Activated naive CD4-positive, alpha-beta T cell treated with anti-CD3 and anti-CD28 coated beads for 36 hours (primary cell): ENCODE measurements at regions of chr6 and their contacts with region 1.

Region 1: DNA sequence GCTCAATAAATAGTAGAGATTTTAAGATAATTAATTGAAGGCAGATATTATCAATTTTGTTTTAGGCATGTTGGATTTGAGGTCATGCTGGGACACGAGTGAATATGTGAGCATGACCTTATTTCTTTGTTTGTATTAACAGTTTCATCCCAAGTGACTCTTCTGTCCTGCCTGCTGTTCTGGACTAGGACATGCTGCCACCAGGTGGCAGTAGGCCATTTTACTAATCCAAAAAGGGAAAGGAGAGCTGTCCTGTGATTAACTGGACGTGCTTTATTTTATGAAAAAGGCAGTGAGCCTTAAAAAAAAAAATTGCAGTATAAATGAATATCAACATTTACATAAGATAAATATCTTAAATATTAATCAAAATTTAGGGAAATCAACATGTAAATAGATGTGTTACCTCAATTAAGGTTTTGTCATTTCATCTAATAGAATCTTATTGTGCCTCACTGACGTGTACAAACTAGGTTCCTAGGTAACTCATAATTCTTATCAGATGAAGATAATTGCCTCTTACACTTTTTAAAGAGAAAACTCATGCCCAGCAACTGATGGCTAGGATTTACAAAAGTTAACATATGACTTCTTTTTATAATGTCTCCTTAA is 49.8 kb downstream of the FRK start:
- DNase-seq: peak; percentile 74
- H3K4me3 Mint-ChIP-seq: no peak overlapping the region
- H3K27ac Mint-ChIP-seq: peak overlapping the region; percentile 35
- H3K4me1 Mint-ChIP-seq: peaks cover 18% of the 10 kb centered on the region
- H3K27me3 Mint-ChIP-seq: peaks cover 16% of the 10 kb centered on the region

Region 2: GRCh38 chr6:116027801-116028200 is 16.9 kb after region 1 on chr6:
- CTCF ChIA-PET with region 1: no interaction called
- intact Hi-C with region 1: loop called (anchors 1 kb)
- DNase-seq: no peak
- H3K4me3 Mint-ChIP-seq: no peak overlapping the region
- H3K27ac Mint-ChIP-seq: no peak overlapping the region
- H3K4me1 Mint-ChIP-seq: peaks cover 15% of the 10 kb centered on the region
- H3K27me3 Mint-ChIP-seq: peaks cover 3% of the 10 kb centered on the region

Region 3: DNA sequence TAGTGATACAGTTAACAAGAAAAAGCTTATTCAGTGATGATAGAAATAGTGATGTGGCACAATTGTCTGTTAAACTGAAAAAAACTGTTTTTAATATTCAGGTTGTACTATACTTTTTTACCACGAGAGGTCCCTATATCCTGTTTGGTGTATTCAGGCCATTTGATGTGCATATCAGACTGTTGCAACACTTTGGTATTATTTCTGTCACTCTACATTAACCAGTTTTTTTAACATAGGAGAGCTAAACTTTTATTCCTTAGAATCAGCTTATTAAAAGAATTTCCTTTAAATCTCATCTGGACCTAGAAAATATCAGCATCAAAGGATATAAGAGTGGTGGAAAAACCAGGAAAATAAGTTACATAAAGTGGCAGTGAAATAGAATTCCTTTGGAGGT is 206.2 kb after region 1 on chr6:
- CTCF ChIA-PET with region 1: no interaction called
- intact Hi-C with region 1: loop called (anchors 2 kb)
- DNase-seq: no peak
- H3K4me3 Mint-ChIP-seq: no peak overlapping the region
- H3K27ac Mint-ChIP-seq: no peak overlapping the region
- H3K4me1 Mint-ChIP-seq: peaks cover 4% of the 10 kb centered on the region
- H3K27me3 Mint-ChIP-seq: no peaks in the 10 kb centered on the region

Region 4: DNA sequence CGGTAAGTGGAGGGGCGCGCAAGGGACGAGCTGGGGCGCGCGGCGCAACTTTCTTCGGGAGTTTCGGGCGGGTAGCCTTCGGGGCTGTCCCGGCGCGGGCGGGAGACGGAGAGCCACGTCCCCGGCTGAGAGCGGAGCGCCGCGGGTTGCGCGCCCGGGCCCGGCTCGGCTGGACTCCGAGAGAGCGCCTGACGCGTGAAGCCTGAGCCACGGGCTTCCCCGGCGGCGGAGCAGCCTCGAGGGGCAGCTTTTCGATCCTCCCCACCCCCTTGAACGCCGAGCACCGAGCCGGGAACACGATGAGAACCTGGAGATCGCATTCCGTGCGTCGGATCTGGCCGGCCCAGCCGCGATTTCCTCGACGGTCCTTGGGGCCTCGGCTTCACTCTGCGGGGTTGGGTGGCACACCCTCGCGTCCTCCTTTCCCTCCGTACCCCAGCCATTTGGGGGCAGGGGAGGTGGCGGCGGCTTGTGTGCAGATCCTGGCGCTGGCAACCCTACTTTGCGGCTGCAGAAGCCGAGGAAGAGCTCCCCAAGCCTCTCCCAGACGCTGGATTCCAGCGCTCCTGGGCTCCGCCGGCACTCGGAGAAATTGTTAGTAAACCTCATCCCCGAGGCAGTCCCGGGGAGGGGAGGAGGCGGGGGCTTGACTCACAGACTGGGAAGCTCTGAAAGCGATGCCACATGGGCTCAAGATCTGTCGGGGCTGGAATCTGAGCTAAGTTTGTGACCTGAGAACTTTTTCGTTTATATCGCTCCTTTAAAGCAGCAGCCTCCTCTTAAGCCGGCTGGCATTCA is 360.4 kb after region 1 on chr6:
- CTCF ChIA-PET with region 1: no interaction called
- intact Hi-C with region 1: loop called (anchors 10 kb)
- DNase-seq: peak; percentile 43
- H3K4me3 Mint-ChIP-seq: peak overlapping the region; percentile 71
- H3K27ac Mint-ChIP-seq: no peak overlapping the region
- H3K4me1 Mint-ChIP-seq: peaks cover 8% of the 10 kb centered on the region
- H3K27me3 Mint-ChIP-seq: peaks cover 24% of the 10 kb centered on the region

Region 5: DNA sequence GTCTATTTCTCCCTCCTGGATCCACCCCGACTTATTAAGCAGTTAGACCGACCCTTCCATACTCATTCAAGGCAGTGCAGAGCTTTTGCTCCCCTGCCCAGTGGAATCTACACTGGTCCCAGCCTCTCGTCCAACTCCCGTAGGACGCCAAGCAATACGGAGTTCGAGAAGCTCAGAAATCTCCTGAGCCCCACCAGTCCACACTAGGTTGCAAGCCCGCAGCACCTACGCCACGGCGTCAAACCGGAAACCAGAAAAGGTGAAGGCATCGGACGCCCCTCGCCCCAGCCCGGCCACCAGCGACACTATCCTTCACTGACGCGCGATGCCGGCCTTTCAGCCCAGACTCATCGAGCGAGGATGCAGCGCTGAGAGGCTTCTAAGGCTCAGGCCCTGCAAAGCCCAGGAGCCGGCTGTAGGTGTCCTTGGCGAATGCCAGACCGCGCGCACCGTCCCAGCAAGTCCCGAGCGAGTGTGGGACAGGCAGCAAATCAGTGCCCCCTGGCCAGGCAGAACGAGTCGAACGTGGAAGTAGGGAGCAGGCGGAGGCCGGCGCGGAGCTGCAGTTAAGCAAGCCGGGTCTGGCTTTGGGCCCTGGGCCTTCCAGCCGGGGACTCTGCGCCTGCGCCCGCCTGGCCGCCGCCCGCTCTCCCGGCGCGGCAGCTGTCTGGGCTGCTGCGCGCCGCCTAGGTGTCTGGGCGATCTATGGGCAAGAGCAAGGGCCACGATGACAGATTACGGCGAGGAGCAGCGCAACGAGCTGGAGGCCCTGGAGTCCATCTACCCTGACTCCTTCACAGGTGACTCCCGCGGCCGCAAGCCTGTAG is 560.2 kb after region 1 on chr6 and contains the start of gene RWDD1:
- CTCF ChIA-PET with region 1: no interaction called
- intact Hi-C with region 1: loop called (anchors 1 kb)
- DNase-seq: peak; percentile 99
- H3K4me3 Mint-ChIP-seq: peak within 1 kb of the TSS; percentile 93
- H3K27ac Mint-ChIP-seq: peak within 1 kb of the TSS; percentile 88
- H3K4me1 Mint-ChIP-seq: peaks cover 49% of the 10 kb centered on the region
- H3K27me3 Mint-ChIP-seq: no peaks in the 10 kb centered on the region
- total RNA-seq, gene RWDD1: 47.8 to 50.3 TPM